ENCODE measurements at regions of chr4 and their contacts with region 1.

Region 1: GRCh38 chr4:88268913-88269312 is 15.4 kb downstream of the PPM1K start:
- DNase-seq: no peak
- H3K4me3 ChIP-seq: no peak overlapping the region
- H3K27ac ChIP-seq: no peak overlapping the region
- H3K4me1 ChIP-seq: no peaks in the 10 kb centered on the region
- H3K27me3 ChIP-seq: no peaks in the 10 kb centered on the region
- CTCF ChIP-seq: no peak

Region 2: DNA sequence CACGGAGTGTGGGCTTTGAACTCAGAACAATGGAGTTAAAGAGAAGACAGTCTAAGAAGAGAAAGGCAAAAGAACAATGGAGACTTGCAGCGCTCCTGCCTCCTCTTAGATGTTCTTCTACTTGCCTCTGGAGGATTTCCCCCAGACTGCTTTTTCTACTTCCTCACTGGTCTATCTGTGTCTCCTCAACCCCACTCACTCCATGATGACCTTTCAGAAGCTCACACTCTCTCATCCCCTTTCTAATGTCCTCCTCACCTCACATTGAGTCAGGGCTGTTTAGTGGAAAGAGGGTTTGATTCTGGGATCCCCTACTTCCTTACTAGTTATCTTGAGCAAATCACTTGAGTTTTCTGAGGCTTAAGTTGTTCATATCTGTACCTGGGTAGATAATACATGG is 97.5 kb after region 1 on chr4:
- CTCF ChIA-PET with region 1: no interaction called
- dilution Hi-C with region 1: no loop called
- in situ Hi-C with region 1: no loop called
- intact Hi-C with region 1: loop called (anchors 5 kb)
- DNase-seq: no peak
- H3K4me3 ChIP-seq: no peak overlapping the region
- H3K27ac ChIP-seq: no peak overlapping the region
- H3K4me1 ChIP-seq: no peaks in the 10 kb centered on the region
- H3K27me3 ChIP-seq: no peaks in the 10 kb centered on the region
- CTCF ChIP-seq: no peak